ENCODE measurements at regions of chr11 and their contacts with region 1.

Region 1: DNA sequence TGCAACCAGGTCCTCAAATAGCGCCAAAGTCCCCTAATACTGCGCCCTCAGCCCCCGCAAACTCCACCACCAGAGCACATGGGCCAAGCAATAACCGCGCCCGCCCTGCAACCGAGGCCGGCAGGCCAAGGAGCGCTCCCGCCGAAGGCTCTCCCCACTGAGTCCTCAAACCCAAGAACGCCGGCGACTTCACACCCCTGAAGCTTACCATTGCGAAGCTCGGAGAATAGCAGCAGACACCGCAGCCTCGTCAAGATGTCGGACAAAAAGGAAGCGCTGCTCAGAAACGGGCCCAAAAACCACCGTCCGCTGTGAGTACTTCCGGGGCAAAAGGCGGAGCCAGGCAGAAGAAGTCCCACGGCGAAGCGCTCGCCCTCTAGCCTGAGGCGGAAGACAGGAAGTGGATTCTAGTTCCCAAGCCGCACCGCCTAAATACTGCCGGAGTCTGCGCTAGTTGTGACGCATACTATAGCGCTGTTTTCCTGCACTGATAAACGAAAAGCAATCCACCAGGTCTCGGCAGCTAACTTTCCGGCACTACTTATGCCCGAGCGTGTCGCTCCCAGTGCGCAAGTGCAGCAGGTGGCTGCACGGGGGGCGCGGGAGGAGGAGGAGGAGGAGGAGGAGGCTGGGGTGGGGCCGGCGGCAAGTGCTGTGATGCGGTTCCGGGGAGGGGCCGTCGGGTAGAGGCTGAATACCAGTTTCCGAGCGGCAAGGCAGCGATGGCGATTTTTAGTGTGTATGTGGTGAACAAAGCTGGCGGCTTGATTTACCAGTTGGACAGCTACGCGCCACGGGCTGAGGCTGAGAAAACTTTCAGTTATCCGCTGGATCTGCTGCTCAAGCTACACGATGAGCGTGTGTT is at the starts of genes RPS25 and TRAPPC4:
- DNase-seq: peak; percentile 96 to 97 (median 96)
- ATAC-seq: peak; percentile 95 to 97 (median 96)
- H3K4me3 ChIP-seq: peak within 1 kb of the TSS; percentile 74 to 98 (median 86)
- H3K27ac ChIP-seq: peak within 1 kb of the TSS; percentile 60 to 97 (median 94)
- H3K4me1 ChIP-seq: peaks cover 9 to 54% (median 35%) of the 10 kb centered on the region in 12 donors
- H3K27me3 ChIP-seq: no peaks in the 10 kb centered on the region
- CTCF ChIP-seq: peak in 4 of 12 donors; percentile 8 to 38 (median 16)
- POLR2A ChIP-seq: peak in 1 of 2 donors; percentile 38
- total RNA-seq, gene RPS25: 719 to 1,307 (median 821) TPM
- total RNA-seq, gene TRAPPC4: 31.9 to 57.1 (median 44.4) TPM

Region 2: DNA sequence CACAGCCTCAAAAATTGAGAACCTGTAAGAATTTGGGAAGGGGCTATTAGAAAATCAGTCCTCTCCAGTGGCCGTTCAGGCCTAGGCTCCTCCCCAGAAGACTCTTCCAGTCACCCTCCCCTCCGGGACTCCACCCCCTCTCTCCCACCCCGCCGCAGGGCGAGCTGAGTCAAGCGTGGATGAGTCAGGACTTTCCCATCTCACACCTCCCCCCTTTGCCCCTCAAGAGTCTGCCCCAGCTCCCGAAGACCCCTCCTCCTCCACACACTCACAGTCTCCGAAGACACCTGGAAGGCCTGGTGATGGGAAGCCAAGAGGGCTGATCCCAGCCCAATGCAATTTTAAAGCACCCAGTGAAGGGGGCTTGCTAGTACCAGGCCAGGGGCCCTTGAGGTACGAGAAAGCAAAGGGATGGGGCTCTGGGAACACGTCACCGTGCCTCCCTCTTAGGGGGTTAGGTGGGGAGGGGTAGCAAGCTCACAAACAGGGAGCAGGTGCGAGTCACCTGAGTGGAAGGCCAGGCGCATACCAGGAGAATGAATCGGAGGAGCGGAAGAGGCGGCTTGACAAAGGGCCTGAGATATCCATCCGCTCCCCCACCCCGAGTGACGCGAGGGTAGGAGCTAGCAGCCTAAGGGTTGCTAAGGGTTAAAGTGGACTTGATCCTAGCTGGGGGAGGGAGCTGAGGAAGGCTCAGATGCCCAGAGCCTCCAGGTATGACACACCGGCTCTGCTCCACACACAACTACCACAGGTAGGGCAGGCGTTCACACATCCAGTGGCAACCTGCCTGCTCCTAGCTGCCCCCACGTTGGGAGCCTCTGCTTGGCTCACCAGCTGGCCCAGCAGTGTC is 106.2 kb before region 1 on chr11:
- intact Hi-C with region 1: no loop called
- DNase-seq: peak; percentile 81 to 93 (median 87)
- ATAC-seq: peak; percentile 16 to 62 (median 46)
- H3K4me3 ChIP-seq: peak overlapping the region in 9 of 12 donors; percentile 44 to 59 (median 48)
- H3K27ac ChIP-seq: peak overlapping the region; percentile 65 to 100 (median 95)
- H3K4me1 ChIP-seq: peaks cover 39 to 100% (median 99%) of the 10 kb centered on the region in 12 donors
- H3K27me3 ChIP-seq: no peaks in the 10 kb centered on the region
- CTCF ChIP-seq: no peak
- POLR2A ChIP-seq: peak in 1 of 2 donors; percentile 41

Region 3: GRCh38 chr11:118997627-118998387 is 20.5 kb before region 1 on chr11 and contains the start of gene CENATAC:
- intact Hi-C with region 1: loop called in 1 of 10 experiments (anchors 2 kb)
- DNase-seq: peak; percentile 95 to 98 (median 97)
- ATAC-seq: peak; percentile 98 to 100 (median 100)
- H3K4me3 ChIP-seq: peak within 1 kb of the TSS; percentile 53 to 95 (median 87)
- H3K27ac ChIP-seq: peak within 1 kb of the TSS; percentile 57 to 91 (median 84)
- H3K4me1 ChIP-seq: peaks cover 0 to 23% (median 17%) of the 10 kb centered on the region in 12 donors
- H3K27me3 ChIP-seq: no peaks in the 10 kb centered on the region
- CTCF ChIP-seq: peak in 4 of 12 donors; percentile 9 to 43 (median 28)
- POLR2A ChIP-seq: peak in 1 of 2 donors; percentile 95
- total RNA-seq, gene CENATAC: 7.9 to 15.8 (median 11.7) TPM

Region 4: GRCh38 chr11:119400860-119401259 is 382.6 kb after region 1 on chr11:
- intact Hi-C with region 1: no loop called
- DNase-seq: no peak
- ATAC-seq: no peak
- H3K4me3 ChIP-seq: no peak overlapping the region
- H3K27ac ChIP-seq: no peak overlapping the region
- H3K4me1 ChIP-seq: no peaks in the 10 kb centered on the region
- H3K27me3 ChIP-seq: no peaks in the 10 kb centered on the region
- CTCF ChIP-seq: no peak
- POLR2A ChIP-seq: no peak